Calu3 (cell line): ENCODE measurements at regions of chr1 and their contacts with region 1.

Region 1: GRCh38 chr1:66242646-66243547 is 291.1 kb upstream of the SGIP1 start:
- DNase-seq: peak; percentile 86
- H3K4me3 Mint-ChIP-seq: no peak overlapping the region
- H3K27ac Mint-ChIP-seq: no peak overlapping the region
- H3K4me1 Mint-ChIP-seq: peaks cover 8% of the 10 kb centered on the region
- H3K27me3 Mint-ChIP-seq: no peaks in the 10 kb centered on the region
- CTCF ChIP-seq: peak; percentile 96

Region 2: DNA sequence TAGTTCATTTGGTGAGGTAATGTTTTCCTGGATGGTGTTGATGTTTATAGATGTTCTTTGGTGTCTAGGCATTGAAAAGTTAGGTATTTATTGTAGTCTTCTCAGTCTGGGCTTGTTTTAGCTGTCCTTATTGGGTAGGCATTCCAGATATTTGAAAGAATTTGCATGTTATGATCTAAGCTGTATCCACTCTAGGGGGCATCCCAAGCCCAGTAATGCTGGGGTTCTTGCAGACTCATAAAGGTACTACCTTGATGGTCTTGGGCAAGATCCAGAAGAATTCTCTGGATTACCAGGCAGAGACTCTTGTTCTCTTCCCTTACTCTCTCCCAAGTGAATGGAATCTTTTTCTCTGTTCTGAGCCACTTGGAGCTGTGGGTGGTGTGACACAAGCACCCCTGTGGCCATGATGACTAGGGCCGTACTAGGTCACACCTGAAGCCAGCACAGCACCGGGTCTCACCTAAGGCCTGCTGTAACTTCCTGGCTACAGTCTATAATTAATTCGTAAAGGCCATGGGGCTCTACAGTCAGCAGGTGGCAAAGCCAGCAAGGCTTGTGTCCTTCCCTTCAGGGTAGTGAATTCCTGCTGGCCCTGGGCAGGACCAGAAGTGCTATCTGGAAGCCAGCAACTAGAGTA is 525.0 kb before region 1 on chr1:
- CTCF ChIA-PET with region 1: interaction called, 8 read pairs
- intact Hi-C with region 1: loop called (anchors 1 kb)
- DNase-seq: peak; percentile 21
- H3K4me3 Mint-ChIP-seq: no peak overlapping the region
- H3K27ac Mint-ChIP-seq: no peak overlapping the region
- H3K4me1 Mint-ChIP-seq: no peaks in the 10 kb centered on the region
- H3K27me3 Mint-ChIP-seq: peaks cover 16% of the 10 kb centered on the region
- CTCF ChIP-seq: no peak

Region 3: DNA sequence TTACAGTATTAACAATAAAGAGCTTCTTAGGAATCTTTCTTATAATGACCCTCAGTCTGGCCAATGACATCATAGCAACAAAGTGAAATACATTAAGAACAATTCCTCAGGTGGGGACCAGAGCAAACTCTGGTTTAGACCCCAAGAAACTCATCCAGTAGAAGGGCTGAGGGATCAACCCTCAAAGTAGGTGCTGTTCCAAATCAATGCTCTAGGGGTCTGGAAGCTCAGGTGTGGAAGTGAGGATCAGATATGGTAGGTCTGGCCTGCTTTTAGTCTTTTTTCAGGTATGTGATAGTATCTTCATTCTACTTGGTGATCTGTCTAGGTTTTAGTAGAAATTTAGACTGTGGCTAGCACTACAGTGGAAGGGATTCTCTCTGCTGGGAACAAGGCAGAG is 158.5 kb before region 1 on chr1:
- CTCF ChIA-PET with region 1: interaction called, 3 read pairs
- intact Hi-C with region 1: loop called (anchors 10 kb)
- DNase-seq: no peak
- H3K4me3 Mint-ChIP-seq: no peak overlapping the region
- H3K27ac Mint-ChIP-seq: no peak overlapping the region
- H3K4me1 Mint-ChIP-seq: no peaks in the 10 kb centered on the region
- H3K27me3 Mint-ChIP-seq: peaks cover 24% of the 10 kb centered on the region
- CTCF ChIP-seq: peak; percentile 24

Region 4: GRCh38 chr1:66182551-66183178 is 60.2 kb before region 1 on chr1:
- CTCF ChIA-PET with region 1: no interaction called
- intact Hi-C with region 1: loop called (anchors 5 kb)
- DNase-seq: no peak
- H3K4me3 Mint-ChIP-seq: no peak overlapping the region
- H3K27ac Mint-ChIP-seq: no peak overlapping the region
- H3K4me1 Mint-ChIP-seq: peaks cover under 1% of the 10 kb centered on the region
- H3K27me3 Mint-ChIP-seq: no peaks in the 10 kb centered on the region
- CTCF ChIP-seq: no peak

Region 5: DNA sequence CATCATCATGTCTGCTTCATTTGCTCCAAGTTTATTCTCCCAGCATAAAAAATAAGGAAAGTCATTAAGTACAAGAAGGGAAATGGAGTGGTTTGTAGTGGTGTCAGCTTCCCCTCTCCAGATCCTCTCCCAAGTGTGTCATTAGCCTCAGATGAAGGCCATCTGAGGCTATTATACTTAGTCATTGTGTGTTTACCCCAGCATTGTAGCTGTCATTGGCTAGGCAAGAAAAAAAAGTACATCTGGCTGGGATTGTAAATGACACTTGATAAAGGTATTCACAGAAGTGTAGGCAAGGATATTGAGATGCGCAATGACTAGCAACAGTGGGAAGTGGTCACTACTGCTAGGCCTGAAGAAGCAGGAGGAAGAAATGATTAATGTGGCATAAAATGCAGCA is 25.9 kb before region 1 on chr1:
- CTCF ChIA-PET with region 1: no interaction called
- intact Hi-C with region 1: no loop called
- DNase-seq: no peak
- H3K4me3 Mint-ChIP-seq: no peak overlapping the region
- H3K27ac Mint-ChIP-seq: no peak overlapping the region
- H3K4me1 Mint-ChIP-seq: no peaks in the 10 kb centered on the region
- H3K27me3 Mint-ChIP-seq: no peaks in the 10 kb centered on the region
- CTCF ChIP-seq: no peak

Region 6: GRCh38 chr1:66271216-66271903 is 28.5 kb after region 1 on chr1:
- CTCF ChIA-PET with region 1: interaction called, 10 read pairs
- intact Hi-C with region 1: no loop called
- DNase-seq: peak; percentile 75
- H3K4me3 Mint-ChIP-seq: peak overlapping the region; percentile 38
- H3K27ac Mint-ChIP-seq: peak overlapping the region; percentile 72
- H3K4me1 Mint-ChIP-seq: peaks cover 38% of the 10 kb centered on the region
- H3K27me3 Mint-ChIP-seq: no peaks in the 10 kb centered on the region
- CTCF ChIP-seq: no peak